ENCODE measurements at regions of chr3 and their contacts with region 1.

Region 1: DNA sequence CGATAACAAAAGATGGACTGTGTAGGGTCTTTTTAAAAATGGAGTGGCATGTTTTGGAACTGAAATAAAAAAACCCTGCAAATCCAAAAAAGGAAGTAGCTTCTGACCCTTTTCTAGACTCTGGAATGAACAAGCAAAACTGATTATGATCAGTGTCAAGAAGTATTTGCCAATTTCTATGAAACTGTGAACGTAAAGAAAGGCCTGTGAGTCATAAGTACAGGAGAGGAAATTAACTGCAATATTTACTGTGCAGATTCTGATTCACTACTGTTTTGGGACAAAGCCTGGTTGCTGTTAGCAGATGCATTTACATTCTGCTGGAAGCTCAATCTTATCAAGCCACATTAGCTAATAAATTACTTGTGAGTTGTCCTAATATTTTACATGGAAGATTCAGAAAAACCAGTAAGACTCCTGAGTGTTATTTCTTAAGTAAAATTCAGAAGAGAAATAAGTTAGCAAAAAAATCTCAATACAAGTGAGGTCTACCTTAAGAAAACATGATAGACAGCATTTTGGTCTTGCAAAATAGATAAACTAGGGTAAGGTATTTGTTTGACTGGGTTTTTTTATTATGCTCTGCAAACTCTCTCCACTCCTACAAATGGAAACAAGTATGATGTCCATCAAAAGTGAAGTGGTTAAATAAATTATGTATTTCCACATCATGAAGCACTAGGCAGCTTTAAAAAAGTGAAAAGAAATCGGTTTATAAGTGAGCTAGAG is 90.2 kb upstream of the LMOD3 start:
- DNase-seq: peak; percentile 77
- ATAC-seq: peak; percentile 85
- H3K4me3 ChIP-seq: no peak overlapping the region
- H3K27ac ChIP-seq: peak overlapping the region; percentile 85
- H3K4me1 ChIP-seq: peaks cover 18% of the 10 kb centered on the region
- H3K27me3 ChIP-seq: no peaks in the 10 kb centered on the region
- CTCF ChIP-seq: no peak

Region 2: GRCh38 chr3:69174445-69174844 is 38.1 kb before region 1 on chr3:
- CTCF ChIA-PET with region 1: no interaction called
- POLR2A ChIA-PET with region 1: no interaction called
- intact Hi-C with region 1: no loop called
- DNase-seq: no peak
- ATAC-seq: no peak
- H3K4me3 ChIP-seq: no peak overlapping the region
- H3K27ac ChIP-seq: no peak overlapping the region
- H3K4me1 ChIP-seq: peaks cover 12% of the 10 kb centered on the region
- H3K27me3 ChIP-seq: no peaks in the 10 kb centered on the region
- CTCF ChIP-seq: no peak

Region 3: GRCh38 chr3:69299361-69299760 is 86.8 kb after region 1 on chr3:
- CTCF ChIA-PET with region 1: no interaction called
- POLR2A ChIA-PET with region 1: no interaction called
- intact Hi-C with region 1: loop called (anchors 1 kb)
- DNase-seq: peak; percentile 43
- ATAC-seq: peak; percentile 73
- H3K4me3 ChIP-seq: no peak overlapping the region
- H3K27ac ChIP-seq: no peak overlapping the region
- H3K4me1 ChIP-seq: peaks cover 9% of the 10 kb centered on the region
- H3K27me3 ChIP-seq: no peaks in the 10 kb centered on the region
- CTCF ChIP-seq: peak; percentile 32; the same call in 1 of the 2 replicates